ENCODE measurements at regions of chr5 and their contacts with region 1.

Region 1: DNA sequence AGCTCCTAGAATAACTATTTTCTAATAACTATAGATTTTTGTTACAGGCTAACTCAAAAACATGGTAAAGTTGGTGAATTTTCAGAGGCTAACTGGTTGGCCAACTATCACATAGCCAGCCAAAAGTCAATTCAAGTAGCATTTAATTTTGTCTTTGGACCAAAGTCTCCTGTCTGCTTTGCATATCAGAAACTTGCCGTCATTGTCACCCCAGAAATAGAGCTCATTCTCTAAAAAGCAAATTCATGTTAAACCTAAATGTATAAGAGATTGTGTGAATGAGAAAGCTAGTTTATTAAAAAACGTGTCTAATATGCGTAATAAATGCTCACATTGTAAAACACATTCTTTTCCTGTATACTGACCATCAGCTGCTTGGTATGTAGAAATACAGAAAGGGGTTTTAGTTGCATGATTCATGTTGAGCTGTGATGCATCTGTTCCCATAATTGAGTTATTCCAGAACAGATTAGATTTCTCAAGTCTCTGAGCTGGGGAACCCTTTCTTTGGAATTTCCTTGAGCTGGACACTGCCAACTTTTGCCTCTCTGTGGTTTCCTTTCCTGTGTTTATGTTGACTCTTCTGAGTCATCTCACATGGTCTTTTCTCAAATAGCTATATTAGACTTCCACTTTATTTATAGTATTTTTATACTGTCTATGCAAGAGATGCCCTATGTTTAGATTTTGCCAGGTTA is 7.3 kb downstream of the SRFBP1 start:
- DNase-seq: peak; percentile 98
- H3K4me3 ChIP-seq: peak overlapping the region; percentile 36
- H3K27ac ChIP-seq: peak overlapping the region; percentile 86
- H3K27me3 ChIP-seq: no peaks in the 10 kb centered on the region
- CTCF ChIP-seq: no peak

Region 2: GRCh38 chr5:122126177-122126755 is 157.2 kb after region 1 on chr5:
- CTCF ChIA-PET with region 1: interaction called, 6 read pairs
- POLR2A ChIA-PET with region 1: interaction called, 10 read pairs
- DNase-seq: peak; percentile 59
- H3K4me3 ChIP-seq: peak overlapping the region; percentile 51; the same call in 1 of the 2 replicates
- H3K27ac ChIP-seq: no peak overlapping the region
- H3K27me3 ChIP-seq: no peaks in the 10 kb centered on the region
- CTCF ChIP-seq: no peak

Region 3: GRCh38 chr5:122163121-122164069 is 194.3 kb after region 1 on chr5:
- CTCF ChIA-PET with region 1: interaction called, 4 read pairs
- POLR2A ChIA-PET with region 1: interaction called, 14 read pairs
- DNase-seq: peak; percentile 73
- H3K4me3 ChIP-seq: peak overlapping the region; percentile 8; the same call in 1 of the 2 replicates
- H3K27ac ChIP-seq: peak overlapping the region; percentile 90
- H3K27me3 ChIP-seq: no peaks in the 10 kb centered on the region
- CTCF ChIP-seq: no peak

Measured in AG04450 (cell line).